Head of caudate nucleus (tissue), 42 donors: ENCODE measurements at regions of chr2 and their contacts with region 1.

Region 1: GRCh38 chr2:114812261-114812660 is 369.8 kb downstream of the DPP10 start:
- DNase-seq: peak in 1 of 42 donors; percentile 4

Region 2: DNA sequence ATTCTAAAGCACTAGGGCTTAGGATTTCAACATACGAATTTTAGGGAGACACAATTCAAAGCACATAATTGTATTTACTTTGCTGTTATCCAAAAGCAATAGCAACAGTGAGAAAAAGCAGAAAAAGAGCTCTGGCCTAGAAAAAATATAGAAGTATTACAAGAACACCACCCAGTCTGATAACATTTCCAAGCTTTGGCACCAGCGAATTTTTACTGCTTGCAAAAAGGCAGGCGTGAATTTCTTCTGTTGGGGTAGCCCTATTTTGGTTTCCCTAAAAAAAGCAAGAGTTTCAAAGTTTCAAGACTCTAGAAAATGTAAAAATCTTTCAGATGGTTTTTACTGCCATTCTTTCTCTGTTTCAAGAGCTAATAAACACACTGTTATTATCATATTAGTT is 77.1 kb before region 1 on chr2:
- intact Hi-C with region 1: loop called (anchors 5 kb)
- DNase-seq: no peak

Region 3: DNA sequence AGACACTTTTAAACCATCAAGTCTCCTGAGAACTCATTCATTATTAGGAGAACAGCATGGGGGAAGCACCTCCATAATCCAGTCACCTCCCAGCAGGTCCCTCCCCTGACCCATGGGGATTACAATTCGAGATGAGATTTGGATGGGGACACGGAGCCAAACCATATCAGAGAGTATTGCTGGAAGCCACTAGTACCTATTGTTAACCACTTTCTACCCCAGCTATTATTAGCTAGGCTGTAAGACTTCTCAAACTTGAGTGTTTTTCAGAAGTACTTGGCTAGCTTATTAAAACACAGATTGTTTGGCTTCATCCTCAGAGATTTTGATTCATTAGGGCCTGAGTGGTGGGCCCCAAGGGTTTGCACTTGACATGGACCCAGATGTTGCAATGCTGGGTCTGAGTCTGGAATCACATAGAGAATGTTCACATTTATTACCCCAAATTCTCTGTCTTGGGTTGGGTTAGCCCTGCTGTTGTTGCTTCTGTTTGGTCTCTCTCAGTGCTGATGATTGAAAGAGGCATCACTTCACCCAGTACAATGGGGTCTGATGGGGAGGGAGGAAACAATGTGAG is 137.1 kb after region 1 on chr2:
- intact Hi-C with region 1: no loop called
- DNase-seq: no peak